Astrocyte of the cerebellum (primary cell): ENCODE measurements at regions of chr10 and their contacts with region 1.

Region 1: GRCh38 chr10:4109469-4109868 is 324.5 kb upstream of the KLF6 start:
- DNase-seq: no peak
- H3K4me3 ChIP-seq: no peak overlapping the region
- CTCF ChIP-seq: no peak

Region 2: DNA sequence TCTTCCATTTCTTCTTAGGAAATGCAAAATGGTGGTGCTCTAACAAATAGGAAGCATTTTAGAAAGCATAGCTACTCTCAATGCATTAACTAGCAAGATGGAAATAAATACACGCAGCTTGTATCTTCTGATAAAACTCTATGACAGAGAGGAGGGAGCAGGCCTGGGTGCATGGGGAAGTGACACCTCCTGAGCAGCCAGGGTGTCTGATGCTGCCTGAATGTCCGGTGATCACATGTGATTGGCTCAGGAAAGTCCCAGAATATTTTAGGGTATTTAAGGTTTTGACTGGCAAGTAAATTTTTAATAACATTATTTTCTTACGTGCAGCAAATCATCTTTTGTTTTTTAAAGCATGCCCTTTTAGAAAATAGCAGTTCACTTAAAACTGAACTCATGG is 63.4 kb before region 1 on chr10:
- in situ Hi-C with region 1: loop called (anchors 5 kb)
- DNase-seq: no peak
- H3K4me3 ChIP-seq: no peak overlapping the region
- CTCF ChIP-seq: no peak

Region 3: GRCh38 chr10:4151466-4151865 is 42.0 kb after region 1 on chr10:
- in situ Hi-C with region 1: loop called (anchors 5 kb)
- DNase-seq: no peak
- H3K4me3 ChIP-seq: no peak overlapping the region
- CTCF ChIP-seq: no peak

Region 4: GRCh38 chr10:4291990-4292389 is 182.5 kb after region 1 on chr10:
- in situ Hi-C with region 1: no loop called
- DNase-seq: no peak
- H3K4me3 ChIP-seq: no peak overlapping the region
- CTCF ChIP-seq: no peak